T-cell (primary cell): ENCODE measurements at regions of chr5 and their contacts with region 1.

Region 1: GRCh38 chr5:177351385-177352329 is at the start of gene LMAN2:
- DNase-seq: peak; percentile 85 to 95 (median 91)
- ATAC-seq: peak; percentile 98 to 99 (median 98)
- H3K4me3 ChIP-seq: peak within 1 kb of the TSS; percentile 74 to 95
- H3K4me3 Mint-ChIP-seq: peak within 1 kb of the TSS; percentile 87 to 98 (median 97)
- H3K27ac ChIP-seq: peak within 1 kb of the TSS; percentile 87
- H3K27ac Mint-ChIP-seq: peak within 1 kb of the TSS; percentile 100
- H3K4me1 ChIP-seq: peaks cover 25 to 65% of the 10 kb centered on the region in 2 experiments
- H3K4me1 Mint-ChIP-seq: peaks cover 63 to 69% (median 67%) of the 10 kb centered on the region in 3 donors
- H3K27me3 ChIP-seq: no peaks in the 10 kb centered on the region
- H3K27me3 Mint-ChIP-seq: no peaks in the 10 kb centered on the region
- total RNA-seq, gene LMAN2: 67.2 to 122 (median 106) TPM

Region 2: GRCh38 chr5:177370488-177371119 is 18.9 kb after region 1 on chr5:
- CTCF ChIA-PET with region 1: interaction called, 6 read pairs
- POLR2A ChIA-PET with region 1: interaction called, 3 to 15 read pairs
- DNase-seq: peak in 26 of 35 experiments; percentile 32 to 78 (median 58)
- ATAC-seq: peak; percentile 14 to 84 (median 76)
- H3K4me3 ChIP-seq: peak overlapping the region in 1 of 2 donors; percentile 50
- H3K4me3 Mint-ChIP-seq: peak overlapping the region in 2 of 3 donors; percentile 49 to 74
- H3K27ac ChIP-seq: peak overlapping the region; percentile 63
- H3K27ac Mint-ChIP-seq: peak overlapping the region; percentile 89 to 90
- H3K4me1 ChIP-seq: peaks cover 33 to 89% of the 10 kb centered on the region in 2 experiments
- H3K4me1 Mint-ChIP-seq: peaks cover 62 to 73% (median 67%) of the 10 kb centered on the region in 3 donors
- H3K27me3 ChIP-seq: no peaks in the 10 kb centered on the region
- H3K27me3 Mint-ChIP-seq: no peaks in the 10 kb centered on the region

Region 3: DNA sequence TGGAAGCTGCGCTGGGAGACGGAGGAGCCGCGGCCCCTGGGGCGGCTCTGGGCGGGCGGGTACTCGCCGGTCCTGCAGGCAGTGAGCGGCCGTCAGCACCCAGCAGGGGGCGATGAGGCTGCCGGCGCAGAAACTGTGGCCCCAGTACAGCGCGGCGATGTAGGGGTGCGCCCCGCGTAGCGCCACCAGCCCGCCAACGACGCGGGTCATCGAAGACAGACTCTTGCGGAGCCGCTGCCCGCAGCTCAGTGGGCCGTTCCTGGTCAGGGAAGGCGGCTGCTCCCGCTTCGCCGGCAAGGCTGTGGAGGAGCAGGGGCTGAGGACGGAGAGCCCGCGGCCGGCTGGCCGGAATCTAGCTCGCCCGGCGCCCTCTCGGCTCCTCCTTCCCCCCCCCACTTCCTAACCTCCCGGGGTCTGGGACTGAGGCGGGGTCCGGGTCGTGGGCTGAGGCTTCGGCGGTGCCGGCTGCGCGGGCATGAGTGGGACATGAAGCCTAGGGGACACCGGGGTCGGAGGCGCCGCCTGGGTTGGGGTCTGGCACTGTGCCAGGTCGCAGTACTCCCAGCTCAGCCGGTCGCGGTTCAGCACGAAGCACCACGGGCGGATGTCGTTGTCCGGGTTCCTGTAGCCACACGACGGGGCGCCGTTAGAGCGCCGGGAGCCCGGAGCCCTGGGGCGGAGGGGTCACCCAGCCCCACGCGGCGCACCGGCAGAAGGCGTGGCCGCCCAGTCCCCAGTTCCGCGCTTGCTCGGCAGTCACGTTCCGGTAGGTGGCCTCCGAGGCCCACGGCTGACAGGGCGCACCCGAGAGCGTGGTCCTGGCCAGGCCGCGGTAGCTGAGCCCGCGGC is 52.4 kb after region 1 on chr5:
- CTCF ChIA-PET with region 1: no interaction called
- POLR2A ChIA-PET with region 1: no interaction called
- DNase-seq: peak; percentile 70 to 92 (median 81)
- ATAC-seq: peak; percentile 78 to 81 (median 80)
- H3K4me3 ChIP-seq: peak overlapping the region; percentile 60
- H3K4me3 Mint-ChIP-seq: peak overlapping the region; percentile 75 to 85 (median 79)
- H3K27ac ChIP-seq: peak overlapping the region; percentile 54
- H3K27ac Mint-ChIP-seq: no peak overlapping the region
- H3K4me1 ChIP-seq: peaks cover 22 to 50% of the 10 kb centered on the region in 2 experiments
- H3K4me1 Mint-ChIP-seq: peaks cover 27 to 39% (median 32%) of the 10 kb centered on the region in 3 donors
- H3K27me3 ChIP-seq: peaks cover 7 to 20% of the 10 kb centered on the region in 2 experiments
- H3K27me3 Mint-ChIP-seq: no peaks in the 10 kb centered on the region

Region 4: GRCh38 chr5:177419051-177419450 is 67.4 kb after region 1 on chr5:
- CTCF ChIA-PET with region 1: no interaction called
- POLR2A ChIA-PET with region 1: no interaction called
- DNase-seq: no peak
- ATAC-seq: no peak
- H3K4me3 ChIP-seq: no peak overlapping the region
- H3K4me3 Mint-ChIP-seq: no peak overlapping the region
- H3K27ac ChIP-seq: no peak overlapping the region
- H3K27ac Mint-ChIP-seq: no peak overlapping the region
- H3K4me1 ChIP-seq: peaks cover 4 to 20% of the 10 kb centered on the region in 2 experiments
- H3K4me1 Mint-ChIP-seq: peaks cover 10 to 18% (median 17%) of the 10 kb centered on the region in 3 donors
- H3K27me3 ChIP-seq: no peaks in the 10 kb centered on the region
- H3K27me3 Mint-ChIP-seq: no peaks in the 10 kb centered on the region